ENCODE measurements at regions of chr10 and their contacts with region 1.

Region 1: DNA sequence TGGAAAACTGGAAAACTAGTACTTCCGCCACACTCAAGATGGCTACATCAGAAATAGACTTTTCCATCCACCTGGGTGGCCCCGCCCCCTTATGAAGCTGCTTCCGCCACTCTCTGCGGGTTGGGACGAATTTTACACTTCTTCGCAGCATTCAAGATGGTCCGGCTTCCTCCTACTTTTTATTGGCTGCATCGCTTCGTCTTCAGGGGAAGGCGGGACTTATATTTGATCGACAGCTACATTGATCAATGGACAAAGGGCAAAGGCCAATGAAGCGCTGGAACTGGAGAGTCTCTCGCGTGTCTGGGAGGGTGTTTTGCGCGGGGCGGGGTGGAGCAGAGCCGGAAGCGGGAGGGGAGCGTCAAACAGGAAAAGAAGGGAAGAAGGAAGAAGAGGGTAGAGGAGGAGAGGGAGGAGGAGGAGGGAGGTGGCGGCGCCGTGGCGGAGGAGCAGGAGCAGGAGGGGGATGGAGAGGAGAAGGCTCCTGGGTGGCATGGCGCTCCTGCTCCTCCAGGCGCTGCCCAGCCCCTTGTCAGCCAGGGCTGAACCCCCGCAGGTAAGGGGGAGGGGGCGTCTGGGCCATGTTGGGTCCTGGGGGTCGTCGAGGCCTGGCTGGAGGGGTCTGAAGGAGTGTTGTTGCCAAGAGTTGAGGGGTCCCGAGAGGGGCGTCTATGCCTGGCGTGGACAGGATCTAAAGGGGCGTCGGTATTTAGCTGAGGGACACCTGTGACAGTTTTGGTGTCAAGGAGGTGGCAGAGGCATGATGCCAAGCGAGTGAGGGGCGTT is at the start of gene WBP1L:
- DNase-seq: peak; percentile 97
- H3K4me3 ChIP-seq: peak within 1 kb of the TSS; percentile 100
- CTCF ChIP-seq: no peak

Region 2: GRCh38 chr10:102729029-102730026 is 14.5 kb before region 1 on chr10:
- CTCF ChIA-PET with region 1: interaction called, 13 read pairs
- POLR2A ChIA-PET with region 1: no interaction called
- DNase-seq: no peak
- H3K4me3 ChIP-seq: no peak overlapping the region
- CTCF ChIP-seq: peak; percentile 95